ENCODE measurements at regions of chr9 and their contacts with region 1.

Region 1: DNA sequence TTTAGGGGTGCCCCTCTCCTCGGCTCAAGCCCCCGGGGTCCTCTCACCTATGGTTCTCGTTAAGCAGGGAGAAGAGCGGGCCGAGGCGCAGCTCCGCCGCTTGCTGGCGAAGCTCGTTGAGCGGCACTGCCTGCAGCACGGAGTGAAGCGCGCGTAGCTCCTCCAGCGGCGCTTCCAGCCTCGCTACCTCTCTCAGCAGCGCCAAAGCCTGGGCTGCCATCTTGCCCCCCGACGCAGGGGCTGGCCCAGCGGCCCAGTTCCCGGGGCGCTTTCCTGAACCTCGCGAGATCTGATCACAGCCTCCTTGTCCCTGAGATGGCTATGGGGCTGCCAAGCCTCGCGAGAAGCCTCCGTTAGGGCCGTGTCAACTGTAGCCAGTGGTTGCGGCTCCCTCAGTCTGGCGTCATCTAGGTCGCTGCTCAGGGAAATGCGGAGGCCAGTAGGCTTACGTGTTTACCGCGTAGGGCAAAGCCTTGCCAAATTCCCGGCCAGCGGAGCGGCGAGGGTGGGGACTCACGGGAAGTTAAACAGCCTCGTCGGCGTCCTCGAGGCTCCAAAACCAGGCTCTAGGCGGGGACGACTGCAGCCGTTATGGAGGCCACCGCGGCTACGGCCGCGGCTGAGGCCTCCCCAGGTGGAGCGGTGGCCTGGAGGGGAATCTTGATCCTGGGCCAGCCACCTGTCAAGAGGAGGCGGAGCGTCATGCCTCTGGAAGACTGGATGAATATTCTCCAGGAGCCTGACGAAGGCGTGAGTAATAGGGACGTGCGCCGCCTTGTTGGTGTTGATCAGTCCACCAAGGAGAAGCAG is at the start of gene PSMD5:
- DNase-seq: peak; percentile 99
- H3K4me3 Mint-ChIP-seq: peak within 1 kb of the TSS; percentile 95
- H3K27ac Mint-ChIP-seq: peak within 1 kb of the TSS; percentile 95
- H3K4me1 Mint-ChIP-seq: peaks cover 79% of the 10 kb centered on the region
- H3K27me3 Mint-ChIP-seq: no peaks in the 10 kb centered on the region
- total RNA-seq, gene PSMD5: 69.7 to 71.0 TPM

Region 2: GRCh38 chr9:120792898-120793765 is 49.8 kb before region 1 on chr9 and contains the start of gene FBXW2:
- CTCF ChIA-PET with region 1: interaction called, 8 read pairs
- POLR2A ChIA-PET with region 1: interaction called, 32 read pairs
- intact Hi-C with region 1: loop called (anchors 1 kb)
- DNase-seq: peak; percentile 95
- H3K4me3 Mint-ChIP-seq: peak within 1 kb of the TSS; percentile 80
- H3K27ac Mint-ChIP-seq: peak within 1 kb of the TSS; percentile 93
- H3K4me1 Mint-ChIP-seq: peaks cover 42% of the 10 kb centered on the region
- H3K27me3 Mint-ChIP-seq: no peaks in the 10 kb centered on the region
- total RNA-seq, gene FBXW2: 70.2 to 72.5 TPM

Region 3: GRCh38 chr9:120830151-120830550 is 12.7 kb before region 1 on chr9:
- CTCF ChIA-PET with region 1: no interaction called
- POLR2A ChIA-PET with region 1: no interaction called
- intact Hi-C with region 1: no loop called
- DNase-seq: no peak
- H3K4me3 Mint-ChIP-seq: no peak overlapping the region
- H3K27ac Mint-ChIP-seq: no peak overlapping the region
- H3K4me1 Mint-ChIP-seq: peaks cover 7% of the 10 kb centered on the region
- H3K27me3 Mint-ChIP-seq: no peaks in the 10 kb centered on the region

Region 4: GRCh38 chr9:120875954-120876841 is 33.3 kb after region 1 on chr9:
- CTCF ChIA-PET with region 1: interaction called, 7 read pairs
- POLR2A ChIA-PET with region 1: interaction called, 25 read pairs
- intact Hi-C with region 1: loop called (anchors 1 kb)
- DNase-seq: peak; percentile 96
- H3K4me3 Mint-ChIP-seq: peak overlapping the region; percentile 92
- H3K27ac Mint-ChIP-seq: peak overlapping the region; percentile 98
- H3K4me1 Mint-ChIP-seq: peaks cover 79% of the 10 kb centered on the region
- H3K27me3 Mint-ChIP-seq: no peaks in the 10 kb centered on the region

Region 5: GRCh38 chr9:120921661-120922181 is 78.8 kb after region 1 on chr9:
- CTCF ChIA-PET with region 1: interaction called, 3 read pairs
- POLR2A ChIA-PET with region 1: interaction called, 83 read pairs
- intact Hi-C with region 1: loop called (anchors 1 kb)
- DNase-seq: peak; percentile 57
- H3K4me3 Mint-ChIP-seq: peak overlapping the region; percentile 80
- H3K27ac Mint-ChIP-seq: peak overlapping the region; percentile 97
- H3K4me1 Mint-ChIP-seq: peaks cover 59% of the 10 kb centered on the region
- H3K27me3 Mint-ChIP-seq: no peaks in the 10 kb centered on the region

Region 6: DNA sequence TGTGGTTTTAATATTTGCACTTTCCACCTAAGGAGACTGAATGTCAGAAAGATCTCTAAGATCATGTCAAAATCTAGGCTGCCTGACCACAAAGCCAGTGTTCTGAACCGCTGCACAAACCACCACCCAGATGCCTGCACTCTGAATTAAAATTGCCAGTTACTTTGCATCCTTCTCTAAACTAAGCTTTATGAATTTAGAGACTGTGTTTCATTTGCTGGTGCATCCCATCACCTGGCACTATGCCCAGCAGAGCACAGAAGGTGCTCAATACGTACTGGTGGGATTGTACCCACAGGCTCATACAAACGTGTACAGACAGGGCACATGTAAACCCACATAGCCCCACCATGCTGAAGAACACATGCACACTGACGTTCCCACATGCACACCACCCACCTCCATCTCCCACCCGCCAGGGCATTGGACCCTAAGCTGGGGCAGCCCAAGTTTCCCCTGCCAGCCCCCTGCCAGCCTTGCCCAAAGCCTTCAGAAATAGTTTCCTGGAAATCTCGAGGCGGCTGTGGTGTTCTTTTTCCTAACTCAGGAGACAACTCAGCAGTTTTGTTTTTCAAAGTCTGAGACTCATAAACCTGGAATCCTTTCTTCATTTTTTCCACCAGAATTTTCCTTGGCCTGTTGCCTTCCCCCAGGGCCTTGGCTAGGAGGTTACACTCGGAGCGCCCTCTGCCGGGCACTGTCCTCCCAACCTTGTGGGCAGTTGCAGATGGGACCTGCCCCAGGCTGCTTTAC is 93.3 kb after region 1 on chr9:
- CTCF ChIA-PET with region 1: interaction called, 14 read pairs
- POLR2A ChIA-PET with region 1: interaction called, 12 read pairs
- intact Hi-C with region 1: loop called (anchors 1 kb)
- DNase-seq: peak; percentile 94
- H3K4me3 Mint-ChIP-seq: peak overlapping the region; percentile 48
- H3K27ac Mint-ChIP-seq: peak overlapping the region; percentile 99
- H3K4me1 Mint-ChIP-seq: peaks cover 62% of the 10 kb centered on the region
- H3K27me3 Mint-ChIP-seq: no peaks in the 10 kb centered on the region

Region 7: GRCh38 chr9:121121582-121122087 is 278.7 kb after region 1 on chr9:
- CTCF ChIA-PET with region 1: no interaction called
- POLR2A ChIA-PET with region 1: no interaction called
- intact Hi-C with region 1: loop called (anchors 1 kb)
- DNase-seq: peak; percentile 99
- H3K4me3 Mint-ChIP-seq: peak overlapping the region; percentile 77
- H3K27ac Mint-ChIP-seq: peak overlapping the region; percentile 89
- H3K4me1 Mint-ChIP-seq: peaks cover 48% of the 10 kb centered on the region
- H3K27me3 Mint-ChIP-seq: no peaks in the 10 kb centered on the region